A549 (cell line): ENCODE measurements at regions of chr15 and their contacts with region 1.

Region 1: DNA sequence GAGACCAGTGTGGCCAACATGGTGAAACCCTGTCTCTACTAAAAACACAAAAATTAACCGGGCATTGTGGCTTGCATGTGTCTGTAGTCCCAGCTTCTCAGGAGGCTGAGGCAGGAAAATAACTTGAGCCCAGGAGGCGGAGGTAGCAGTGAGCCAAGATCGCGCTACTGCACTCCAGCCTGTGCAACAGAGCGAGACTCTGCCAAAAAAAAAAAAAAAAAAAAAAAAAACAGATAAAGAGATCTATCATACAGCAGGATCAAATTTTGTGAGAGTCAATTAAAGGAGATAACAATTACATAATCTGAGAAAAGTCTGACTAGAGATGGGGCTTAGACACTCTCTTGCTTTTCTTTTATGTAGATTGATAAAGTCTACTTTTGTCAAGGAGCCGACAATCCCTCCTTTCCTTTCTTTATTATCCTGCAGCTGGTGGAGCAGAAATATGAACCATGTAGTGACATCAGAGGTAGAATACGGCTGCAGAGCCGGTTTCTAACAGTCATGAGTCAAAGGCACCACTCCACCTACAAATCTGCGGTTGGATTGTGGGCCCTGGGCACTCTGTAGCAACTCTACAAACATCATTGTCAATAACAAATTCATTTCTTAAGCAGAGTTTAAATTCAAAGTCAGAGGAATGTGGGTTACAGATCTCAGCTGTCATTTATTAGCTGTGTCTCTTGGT is 9.0 kb downstream of the C2CD4A start:
- DNase-seq: no peak
- ATAC-seq: no peak
- H3K4me3 ChIP-seq: no peak overlapping the region
- H3K27ac ChIP-seq: no peak overlapping the region
- H3K4me1 ChIP-seq: no peaks in the 10 kb centered on the region
- CTCF ChIP-seq: no peak
- EP300 ChIP-seq: no peak
- POLR2A ChIP-seq: no peak
- RAD21 ChIP-seq: no peak

Region 2: GRCh38 chr15:62035256-62035908 is 40.4 kb before region 1 on chr15:
- CTCF ChIA-PET with region 1: no interaction called
- POLR2A ChIA-PET with region 1: no interaction called
- DNase-seq: no peak
- ATAC-seq: peak; percentile 62 to 65; a peak in 4 of 6 replicates
- H3K4me3 ChIP-seq: no peak overlapping the region
- H3K27ac ChIP-seq: no peak overlapping the region
- H3K4me1 ChIP-seq: peaks cover 11% of the 10 kb centered on the region
- CTCF ChIP-seq: no peak
- EP300 ChIP-seq: no peak
- POLR2A ChIP-seq: no peak
- RAD21 ChIP-seq: no peak

Region 3: DNA sequence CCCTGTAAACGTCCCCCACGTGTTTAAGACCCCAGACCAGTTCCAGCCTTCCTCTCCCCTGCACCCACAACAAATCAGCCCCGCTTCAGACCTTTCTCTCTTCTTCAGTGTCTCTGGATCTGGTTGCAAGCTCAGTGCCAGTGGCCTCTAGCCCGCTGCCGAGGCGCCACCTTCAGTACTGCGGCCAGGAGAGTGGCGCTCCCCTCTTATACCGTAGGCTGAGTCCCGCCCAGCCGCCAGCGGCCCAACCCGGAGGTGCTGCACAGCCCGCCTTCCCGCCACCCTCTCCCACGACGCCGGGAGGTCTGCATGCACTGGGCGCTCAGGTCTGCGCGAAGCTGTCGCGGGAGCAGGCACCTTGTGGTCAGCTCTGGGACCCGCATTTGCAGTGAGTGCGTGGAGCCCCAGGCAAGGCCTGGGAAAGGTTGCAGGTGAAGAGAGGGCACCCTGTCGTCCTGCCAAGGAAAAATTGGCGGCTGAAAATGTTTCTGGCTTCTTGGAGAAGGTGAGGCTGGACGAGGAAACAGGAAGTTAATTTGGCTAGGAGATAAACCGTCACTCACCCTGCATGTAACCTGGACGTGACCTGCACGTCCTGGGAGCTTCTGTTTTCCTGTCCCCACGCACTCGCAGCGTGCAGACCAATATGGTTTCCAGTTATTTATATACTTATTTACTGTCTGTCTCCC is 89.5 kb after region 1 on chr15 and contains the start of gene C2CD4B:
- CTCF ChIA-PET with region 1: interaction called, 14 read pairs
- POLR2A ChIA-PET with region 1: no interaction called
- DNase-seq: peak; percentile 17 to 62
- ATAC-seq: peak; percentile 72 to 90
- H3K4me3 ChIP-seq: peak within 1 kb of the TSS; percentile 59
- H3K27ac ChIP-seq: peak within 1 kb of the TSS; percentile 29 to 70; a peak in 5 of 6 replicates
- H3K4me1 ChIP-seq: no peaks in the 10 kb centered on the region
- CTCF ChIP-seq: no peak
- EP300 ChIP-seq: no peak
- POLR2A ChIP-seq: peak; percentile 56
- RAD21 ChIP-seq: no peak
- polyA plus RNA-seq, gene C2CD4B: 0.06 TPM in 1 of 2 replicates, not detected in the other

Region 4: GRCh38 chr15:62287066-62287857 is 211.5 kb after region 1 on chr15:
- CTCF ChIA-PET with region 1: no interaction called
- POLR2A ChIA-PET with region 1: no interaction called
- DNase-seq: no peak
- ATAC-seq: no peak
- H3K4me3 ChIP-seq: no peak overlapping the region
- H3K27ac ChIP-seq: no peak overlapping the region
- H3K4me1 ChIP-seq: 0 out of 3 replicates have a peak, but pooled peaks cover 4% of the 10 kb centered on the region
- CTCF ChIP-seq: no peak
- EP300 ChIP-seq: no peak
- POLR2A ChIP-seq: no peak
- RAD21 ChIP-seq: no peak